WTC11 (cell line): ENCODE measurements at regions of chr3 and their contacts with region 1.

Region 1: DNA sequence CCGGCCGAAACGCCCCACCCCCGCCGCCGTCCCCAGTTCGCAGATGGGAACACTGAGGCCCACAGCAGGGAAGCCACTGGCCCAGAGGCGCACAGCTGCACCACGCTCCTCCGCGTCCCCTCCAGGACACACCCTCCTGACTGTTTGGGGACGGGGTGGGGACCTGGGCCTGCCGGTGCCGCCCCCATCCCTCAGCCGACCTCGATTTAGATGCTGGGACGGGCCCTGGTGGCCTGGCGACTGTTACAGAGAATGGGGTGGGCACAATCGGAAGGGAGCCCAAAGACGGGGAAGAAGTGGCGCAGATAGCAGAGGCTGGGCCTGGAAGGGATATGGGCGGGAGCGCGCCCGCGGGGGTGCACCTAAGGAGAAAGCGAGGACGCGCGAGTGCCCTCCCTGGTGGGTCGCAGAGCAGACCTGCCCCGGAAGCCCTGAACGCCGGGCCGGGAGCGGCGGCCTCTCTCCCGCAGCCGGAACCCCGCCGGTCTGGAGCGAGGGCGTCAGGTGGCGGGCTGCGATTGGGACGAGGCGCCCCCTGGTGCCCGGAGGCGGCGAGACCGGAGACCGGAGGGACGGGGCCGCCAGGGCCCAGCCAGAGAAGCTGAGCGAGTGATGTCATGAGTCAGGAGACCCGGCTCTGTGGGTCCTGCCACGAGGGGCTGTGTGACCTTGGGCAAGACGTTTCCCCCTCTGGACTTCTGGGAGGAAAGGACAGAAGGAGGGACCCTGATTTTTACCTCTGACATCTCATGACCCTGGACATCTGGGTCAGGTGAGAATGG is 78.4 kb downstream of the IQSEC1 start:
- DNase-seq: peak; percentile 90
- ATAC-seq: peak; percentile 71
- H3K4me3 Mint-ChIP-seq: peak overlapping the region; percentile 79
- H3K27ac Mint-ChIP-seq: peak overlapping the region; percentile 79
- H3K4me1 Mint-ChIP-seq: peaks cover 14% of the 10 kb centered on the region
- H3K27me3 Mint-ChIP-seq: peaks cover 6% of the 10 kb centered on the region
- CTCF ChIP-seq: peak; percentile 83

Region 2: DNA sequence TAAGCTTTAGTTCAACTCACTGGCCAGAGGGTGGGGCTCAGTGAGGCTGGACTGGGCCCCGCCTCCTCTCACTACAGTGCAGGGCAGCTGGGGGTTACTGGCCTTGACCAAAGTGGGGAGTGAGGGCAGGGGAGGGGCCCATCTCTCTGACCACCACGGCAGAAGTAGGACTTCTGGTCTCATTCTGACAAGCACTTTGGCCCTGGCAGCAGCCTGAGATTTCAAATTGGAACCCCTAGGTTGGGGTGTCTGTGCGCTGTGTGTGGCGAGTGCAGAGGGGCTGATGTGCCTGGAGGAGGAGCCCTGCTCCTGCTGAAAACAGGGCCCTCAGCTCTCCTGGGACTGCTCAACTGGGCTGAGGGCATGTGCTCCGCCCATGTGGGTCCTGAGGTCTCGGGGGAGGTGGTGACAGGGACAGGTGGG is 93.2 kb before region 1 on chr3:
- CTCF ChIA-PET with region 1: interaction called, 11 read pairs
- POLR2A ChIA-PET with region 1: no interaction called
- DNase-seq: no peak
- ATAC-seq: peak; percentile 84
- H3K4me3 Mint-ChIP-seq: no peak overlapping the region
- H3K27ac Mint-ChIP-seq: no peak overlapping the region
- H3K4me1 Mint-ChIP-seq: peaks cover 10% of the 10 kb centered on the region
- H3K27me3 Mint-ChIP-seq: no peaks in the 10 kb centered on the region
- CTCF ChIP-seq: no peak

Region 3: DNA sequence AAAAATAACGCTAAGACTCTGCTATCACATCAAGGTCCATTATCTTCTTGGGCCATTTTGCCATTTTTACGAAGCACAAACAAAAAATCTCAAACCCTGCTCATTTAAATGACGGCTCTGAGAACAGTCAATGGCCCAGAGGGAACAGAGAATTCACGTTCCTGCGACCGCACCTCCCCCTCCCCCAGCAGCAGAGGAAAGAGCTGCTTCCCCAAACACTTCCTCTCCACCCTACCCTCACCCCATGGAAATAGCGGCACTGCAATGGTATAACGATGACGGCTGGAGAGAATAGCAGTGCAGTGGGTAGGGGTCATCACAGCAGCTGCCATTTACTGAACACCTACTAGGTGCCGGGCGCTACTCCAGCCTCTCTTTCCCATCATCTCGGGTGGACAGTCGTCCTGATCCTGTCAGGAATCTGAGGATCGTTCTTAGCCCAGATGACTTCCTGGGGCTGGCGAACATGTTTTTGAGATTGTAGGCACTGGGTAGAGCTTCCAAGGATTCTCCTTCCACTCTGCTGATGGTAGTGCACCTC is 34.9 kb before region 1 on chr3:
- CTCF ChIA-PET with region 1: interaction called, 27 read pairs
- POLR2A ChIA-PET with region 1: interaction called, 3 read pairs
- DNase-seq: no peak
- ATAC-seq: peak; percentile 66
- H3K4me3 Mint-ChIP-seq: no peak overlapping the region
- H3K27ac Mint-ChIP-seq: 0 out of 2 replicates have a peak overlapping the region, but pooled peaks have one; percentile 22
- H3K4me1 Mint-ChIP-seq: peaks cover 23% of the 10 kb centered on the region
- H3K27me3 Mint-ChIP-seq: no peaks in the 10 kb centered on the region
- CTCF ChIP-seq: no peak

Region 4: GRCh38 chr3:12972781-12973702 is 21.8 kb before region 1 on chr3:
- CTCF ChIA-PET with region 1: interaction called, 27 read pairs
- POLR2A ChIA-PET with region 1: interaction called, 3 read pairs
- DNase-seq: no peak
- ATAC-seq: no peak
- H3K4me3 Mint-ChIP-seq: no peak overlapping the region
- H3K27ac Mint-ChIP-seq: no peak overlapping the region
- H3K4me1 Mint-ChIP-seq: peaks cover 20% of the 10 kb centered on the region
- H3K27me3 Mint-ChIP-seq: peaks cover 16% of the 10 kb centered on the region
- CTCF ChIP-seq: no peak

Region 5: GRCh38 chr3:13019243-13020095 is 24.7 kb after region 1 on chr3:
- CTCF ChIA-PET with region 1: interaction called, 14 read pairs
- POLR2A ChIA-PET with region 1: interaction called, 3 read pairs
- DNase-seq: peak; percentile 80
- ATAC-seq: peak; percentile 77
- H3K4me3 Mint-ChIP-seq: peak overlapping the region; percentile 47
- H3K27ac Mint-ChIP-seq: no peak overlapping the region
- H3K4me1 Mint-ChIP-seq: peaks cover 46% of the 10 kb centered on the region
- H3K27me3 Mint-ChIP-seq: no peaks in the 10 kb centered on the region
- CTCF ChIP-seq: no peak